Activated T-helper 1 cell treated with anti-CD3 and anti-CD28 coated beads, Interleukin-12 subunit alpha, Interleukin-12 subunit beta, Interleukin-2, Interleukin-4 antibody, amounts not matched to agents 30 ng/mL and 10 ng/mL and 1 ng/mL, durations not matched to agents 14 hours and 24 hours and 36 hours (primary cell): ENCODE measurements at regions of chrX and their contacts with region 1.

Region 1: GRCh38 chrX:22063284-22063683 is 31.2 kb downstream of the PHEX start:
- DNase-seq: peak; percentile 0
- H3K4me3 Mint-ChIP-seq: no peak overlapping the region
- H3K27ac Mint-ChIP-seq: peak overlapping the region; percentile 59
- H3K4me1 Mint-ChIP-seq: peaks cover 47% of the 10 kb centered on the region
- H3K27me3 Mint-ChIP-seq: no peaks in the 10 kb centered on the region

Region 2: GRCh38 chrX:21926527-21927278 is 136.6 kb before region 1 on chrX:
- intact Hi-C with region 1: loop called (anchors 5 kb)
- DNase-seq: no peak
- H3K4me3 Mint-ChIP-seq: no peak overlapping the region
- H3K27ac Mint-ChIP-seq: peak overlapping the region; percentile 67
- H3K4me1 Mint-ChIP-seq: peaks cover 35% of the 10 kb centered on the region
- H3K27me3 Mint-ChIP-seq: no peaks in the 10 kb centered on the region

Region 3: GRCh38 chrX:21985332-21985777 is 77.9 kb before region 1 on chrX:
- intact Hi-C with region 1: loop called (anchors 1 kb)
- DNase-seq: peak; percentile 36
- H3K4me3 Mint-ChIP-seq: no peak overlapping the region
- H3K27ac Mint-ChIP-seq: no peak overlapping the region
- H3K4me1 Mint-ChIP-seq: peaks cover 20% of the 10 kb centered on the region
- H3K27me3 Mint-ChIP-seq: no peaks in the 10 kb centered on the region

Region 4: GRCh38 chrX:22041907-22042530 is 21.3 kb before region 1 on chrX:
- intact Hi-C with region 1: no loop called
- DNase-seq: no peak
- H3K4me3 Mint-ChIP-seq: no peak overlapping the region
- H3K27ac Mint-ChIP-seq: no peak overlapping the region
- H3K4me1 Mint-ChIP-seq: peaks cover 22% of the 10 kb centered on the region
- H3K27me3 Mint-ChIP-seq: no peaks in the 10 kb centered on the region

Region 5: DNA sequence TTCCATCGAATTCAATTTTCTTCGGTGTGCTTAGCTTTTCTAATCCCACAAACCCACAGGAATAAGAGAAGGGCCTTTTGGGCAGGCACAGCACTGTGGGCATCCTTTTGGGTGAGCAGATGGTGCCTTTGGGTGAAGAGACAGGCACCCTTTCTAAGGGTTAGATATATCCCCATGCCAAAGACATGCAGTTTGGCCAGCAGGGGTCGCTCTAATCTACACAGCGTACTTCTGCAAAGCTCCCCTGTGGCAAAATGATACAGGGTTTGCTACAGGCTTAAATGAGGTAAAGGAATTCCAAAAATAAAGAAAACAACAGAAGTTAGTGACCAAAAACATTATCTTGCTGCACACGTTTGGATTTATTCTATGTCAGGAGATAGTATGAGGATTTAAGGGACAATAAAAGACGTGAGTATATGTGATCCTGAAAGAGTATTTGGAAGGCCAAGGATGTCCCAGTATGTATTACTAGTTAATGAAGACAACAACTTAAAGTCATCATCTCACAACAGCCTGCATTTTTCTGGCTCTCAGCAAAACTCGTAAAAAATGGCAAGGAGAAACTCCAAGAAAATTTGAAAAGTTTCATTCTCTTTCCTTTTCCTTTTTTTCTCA is 18.3 kb after region 1 on chrX:
- intact Hi-C with region 1: loop called (anchors 1 kb)
- DNase-seq: peak; percentile 2
- H3K4me3 Mint-ChIP-seq: no peak overlapping the region
- H3K27ac Mint-ChIP-seq: peak overlapping the region; percentile 42
- H3K4me1 Mint-ChIP-seq: peaks cover 7% of the 10 kb centered on the region
- H3K27me3 Mint-ChIP-seq: no peaks in the 10 kb centered on the region

Region 6: DNA sequence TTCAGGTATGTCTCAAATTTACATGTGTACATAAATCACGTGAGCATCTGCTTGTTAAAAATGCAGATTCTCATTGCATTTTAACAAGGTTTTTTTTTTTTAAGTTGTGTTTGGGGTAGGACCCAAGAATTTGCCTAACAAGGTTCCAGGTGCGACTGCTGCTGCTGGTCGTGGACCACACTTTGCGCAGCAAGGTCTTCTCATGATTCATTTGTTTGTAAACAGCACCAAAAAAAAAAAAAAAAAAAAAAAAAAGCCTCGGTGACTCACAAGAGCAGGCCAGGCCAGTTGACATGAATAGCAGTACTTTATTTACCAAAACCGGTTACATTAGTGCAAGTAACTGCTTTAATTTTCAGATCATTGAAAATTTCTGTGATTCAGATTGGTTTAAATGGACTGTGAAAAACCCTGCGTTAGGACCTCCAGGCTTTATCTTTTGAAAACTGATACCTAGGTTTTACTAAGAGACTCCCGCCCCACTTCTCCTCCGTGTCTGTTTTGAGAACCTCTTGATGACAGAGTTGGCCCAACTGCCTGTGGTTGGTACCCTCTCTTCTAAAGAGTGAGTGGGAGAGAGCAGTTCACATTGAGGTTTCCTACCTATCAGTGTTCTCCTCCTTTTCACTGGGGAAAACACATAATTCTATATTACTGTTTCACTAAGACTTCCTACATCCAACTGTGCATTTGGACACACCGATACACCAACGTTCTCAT is 55.0 kb after region 1 on chrX:
- intact Hi-C with region 1: loop called (anchors 2 kb)
- DNase-seq: no peak
- H3K4me3 Mint-ChIP-seq: no peak overlapping the region
- H3K27ac Mint-ChIP-seq: peak overlapping the region; percentile 84
- H3K4me1 Mint-ChIP-seq: peaks cover 6% of the 10 kb centered on the region
- H3K27me3 Mint-ChIP-seq: no peaks in the 10 kb centered on the region